Activated naive CD4-positive, alpha-beta T cell treated with anti-CD3 and anti-CD28 coated beads for 36 hours (primary cell): ENCODE measurements at regions of chr1 and their contacts with region 1.

Region 1: GRCh38 chr1:227072991-227073390 is 132.9 kb downstream of the COQ8A start:
- DNase-seq: no peak
- H3K4me3 Mint-ChIP-seq: no peak overlapping the region
- H3K27ac Mint-ChIP-seq: no peak overlapping the region
- H3K4me1 Mint-ChIP-seq: peaks cover 3% of the 10 kb centered on the region
- H3K27me3 Mint-ChIP-seq: peaks cover 3% of the 10 kb centered on the region

Region 2: GRCh38 chr1:226990133-226990716 is 82.8 kb before region 1 on chr1:
- CTCF ChIA-PET with region 1: no interaction called
- intact Hi-C with region 1: loop called (anchors 5 kb)
- DNase-seq: peak; percentile 86
- H3K4me3 Mint-ChIP-seq: no peak overlapping the region
- H3K27ac Mint-ChIP-seq: peak overlapping the region; percentile 57
- H3K4me1 Mint-ChIP-seq: peaks cover 19% of the 10 kb centered on the region
- H3K27me3 Mint-ChIP-seq: no peaks in the 10 kb centered on the region